Activated CD4-positive, alpha-beta memory T cell treated with anti-CD3 and anti-CD28 coated beads, Interleukin-2, amount 10 ng/mL, durations not matched to agents 7 days and 5 days (primary cell): ENCODE measurements at regions of chr12 and their contacts with region 1.

Region 1: GRCh38 chr12:76020731-76021672 is 10.6 kb downstream of the PHLDA1 start:
- DNase-seq: peak; percentile 83
- H3K4me3 Mint-ChIP-seq: peak overlapping the region; percentile 53
- H3K27ac Mint-ChIP-seq: peak overlapping the region; percentile 100
- H3K4me1 Mint-ChIP-seq: peaks cover 69% of the 10 kb centered on the region
- H3K27me3 Mint-ChIP-seq: no peaks in the 10 kb centered on the region

Region 2: GRCh38 chr12:75923964-75924666 is 96.9 kb before region 1 on chr12:
- CTCF ChIA-PET with region 1: no interaction called
- POLR2A ChIA-PET with region 1: interaction called, 14 read pairs
- DNase-seq: no peak
- H3K4me3 Mint-ChIP-seq: no peak overlapping the region
- H3K27ac Mint-ChIP-seq: no peak overlapping the region
- H3K4me1 Mint-ChIP-seq: peaks cover 26% of the 10 kb centered on the region
- H3K27me3 Mint-ChIP-seq: peaks cover 1% of the 10 kb centered on the region

Region 3: DNA sequence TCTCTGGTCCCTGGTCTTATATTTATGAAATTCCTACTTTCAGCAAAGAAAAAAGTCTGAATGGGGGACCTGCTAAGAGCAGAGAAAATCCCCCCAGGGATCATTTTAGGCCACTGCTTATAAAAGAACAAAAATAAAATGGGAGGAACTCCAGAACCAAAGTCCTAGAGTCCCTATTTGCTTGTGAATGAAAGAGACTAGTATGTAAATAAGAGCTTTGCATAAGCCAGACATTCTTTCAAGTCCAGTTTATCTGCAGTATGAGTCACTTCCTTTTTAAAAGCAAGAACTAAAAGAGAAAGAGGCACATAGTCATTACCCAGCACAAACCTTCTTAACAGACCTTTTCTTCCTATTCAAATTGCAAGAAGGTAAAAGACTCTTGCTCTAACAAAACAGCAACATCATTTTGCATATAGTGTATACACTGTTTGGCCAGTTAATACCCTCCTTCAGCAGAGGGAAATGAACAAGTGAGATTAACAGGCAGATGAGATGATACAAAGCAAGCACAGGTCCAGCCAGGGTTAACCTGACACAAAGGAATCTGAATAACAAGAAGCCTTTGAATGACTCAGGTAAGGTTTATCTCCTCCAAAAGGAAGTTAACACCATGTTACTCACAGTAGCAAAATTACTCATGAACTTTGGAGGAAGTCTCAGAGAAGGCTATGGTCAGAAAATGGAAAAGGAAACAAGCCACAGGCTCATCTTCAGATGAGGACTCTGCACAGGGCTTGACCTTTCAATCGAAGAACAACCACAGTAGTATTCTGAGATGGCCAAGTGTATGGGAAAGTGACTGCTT is 76.7 kb before region 1 on chr12:
- CTCF ChIA-PET with region 1: no interaction called
- POLR2A ChIA-PET with region 1: interaction called, 61 read pairs
- DNase-seq: peak; percentile 31
- H3K4me3 Mint-ChIP-seq: peak overlapping the region; percentile 50
- H3K27ac Mint-ChIP-seq: peak overlapping the region; percentile 99
- H3K4me1 Mint-ChIP-seq: peaks cover 38% of the 10 kb centered on the region
- H3K27me3 Mint-ChIP-seq: no peaks in the 10 kb centered on the region

Region 4: DNA sequence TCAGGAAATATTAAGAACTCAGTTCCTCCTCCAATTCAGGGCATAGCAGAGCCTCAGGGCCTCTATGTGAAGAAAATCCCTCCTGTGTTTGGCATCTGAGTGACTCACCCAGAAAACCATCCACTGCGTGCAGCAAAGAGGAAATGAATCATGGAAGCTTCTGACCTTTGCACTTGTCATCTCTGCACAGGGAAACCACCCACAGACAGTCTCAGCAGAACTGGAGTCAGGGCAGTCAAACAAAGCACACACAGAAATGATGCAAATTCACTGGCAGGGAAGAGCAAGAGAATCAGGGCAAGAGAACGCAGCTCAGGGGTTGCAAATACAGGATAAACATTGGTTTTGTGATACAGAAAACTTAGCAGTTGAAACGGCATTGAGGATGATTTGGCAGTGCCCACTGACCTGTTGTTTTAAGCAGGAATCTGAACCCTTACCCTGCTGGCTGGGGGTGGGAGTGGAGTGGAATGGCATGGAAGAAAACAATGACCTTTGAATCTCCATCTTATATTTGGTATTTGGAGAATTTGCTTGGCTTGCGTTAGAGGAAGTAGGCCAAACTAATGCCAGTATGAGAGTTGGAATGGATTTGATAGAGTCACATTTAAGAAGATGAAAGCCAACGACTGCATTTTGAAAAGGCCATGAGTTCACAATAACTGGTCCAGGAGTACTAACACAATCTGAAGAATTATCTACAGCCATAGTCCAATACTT is 42.9 kb before region 1 on chr12:
- CTCF ChIA-PET with region 1: interaction called, 3 read pairs
- POLR2A ChIA-PET with region 1: interaction called, 94 read pairs
- DNase-seq: peak; percentile 86
- H3K4me3 Mint-ChIP-seq: peak overlapping the region; percentile 32
- H3K27ac Mint-ChIP-seq: peak overlapping the region; percentile 92
- H3K4me1 Mint-ChIP-seq: peaks cover 68% of the 10 kb centered on the region
- H3K27me3 Mint-ChIP-seq: no peaks in the 10 kb centered on the region

Region 5: DNA sequence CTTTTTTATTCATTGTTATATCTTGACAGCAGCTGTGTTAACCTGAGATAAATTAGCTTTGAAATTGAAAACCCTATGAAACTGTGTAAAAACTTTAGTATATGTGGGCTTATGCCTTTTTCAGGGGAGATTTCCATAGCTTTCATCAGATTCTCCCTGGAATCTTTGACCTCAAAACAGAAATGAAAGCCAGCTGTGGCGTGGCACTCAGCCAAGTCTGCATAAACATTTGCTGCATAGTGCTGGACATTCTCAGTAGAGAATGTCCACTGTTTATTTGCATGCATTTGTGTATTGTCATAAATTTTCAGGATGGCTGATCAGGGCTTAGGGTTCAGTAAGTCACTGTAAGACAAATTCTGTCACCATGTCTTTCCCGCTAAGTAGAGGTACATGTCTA is 178.8 kb after region 1 on chr12:
- CTCF ChIA-PET with region 1: no interaction called
- POLR2A ChIA-PET with region 1: no interaction called
- DNase-seq: no peak
- H3K4me3 Mint-ChIP-seq: no peak overlapping the region
- H3K27ac Mint-ChIP-seq: no peak overlapping the region
- H3K4me1 Mint-ChIP-seq: no peaks in the 10 kb centered on the region
- H3K27me3 Mint-ChIP-seq: peaks cover 35% of the 10 kb centered on the region